GM12878 (cell line): ENCODE measurements at regions of chr11 and their contacts with region 1.

Region 1: GRCh38 chr11:111777094-111778046 is 11.2 kb upstream of the PPP2R1B start:
- DNase-seq: peak; percentile 52
- ATAC-seq: peak; percentile 92
- H3K4me3 ChIP-seq: no peak overlapping the region
- H3K27ac ChIP-seq: peak overlapping the region; percentile 68
- H3K4me1 ChIP-seq: peaks cover 8% of the 10 kb centered on the region; the same call in 1 of the 2 replicates
- H3K27me3 ChIP-seq: no peaks in the 10 kb centered on the region
- CTCF ChIP-seq: peak; percentile 65 to 86 (median 79)
- EP300 ChIP-seq: no peak
- POLR2A ChIP-seq: no peak
- RAD21 ChIP-seq: peak; percentile 88

Region 2: DNA sequence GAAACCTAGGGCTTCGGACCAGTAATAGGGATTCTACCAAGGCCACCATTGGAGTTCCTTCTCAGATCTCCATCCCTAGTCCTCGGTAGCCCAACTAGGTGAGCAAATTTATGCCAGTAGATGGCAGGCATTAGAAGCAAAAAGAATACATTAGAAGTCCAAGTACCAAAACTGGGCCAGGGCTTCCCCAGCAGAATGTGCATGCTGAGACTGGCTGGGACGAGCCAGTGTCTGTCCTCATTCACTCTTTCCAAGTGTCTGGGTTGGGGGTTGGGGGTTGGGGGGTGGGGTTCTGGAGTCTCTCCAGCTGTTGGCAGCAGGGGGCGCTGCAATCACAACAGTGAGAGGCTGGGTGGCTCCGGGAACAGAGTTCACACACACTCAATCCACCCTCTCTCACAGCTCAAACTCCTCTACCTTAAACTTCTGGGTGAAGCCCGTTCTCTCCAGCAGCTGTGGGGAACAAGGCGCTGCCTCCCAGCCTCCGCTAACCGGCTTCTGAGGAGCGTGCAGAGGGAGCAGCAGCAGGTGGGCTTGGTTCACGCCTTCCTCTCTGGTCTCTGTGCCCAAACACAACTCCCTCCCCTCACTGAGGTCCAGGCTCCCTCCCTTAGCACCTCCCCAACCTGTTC is 322.7 kb before region 1 on chr11:
- CTCF ChIA-PET with region 1: interaction called, 6 read pairs
- POLR2A ChIA-PET with region 1: no interaction called
- RAD21 ChIA-PET with region 1: no interaction called
- SMC1A ChIA-PET with region 1: interaction called, 6 read pairs
- in situ Hi-C with region 1: no loop called
- intact Hi-C with region 1: loop called (anchors 10 kb)
- DNase-seq: no peak
- ATAC-seq: peak; percentile 77
- H3K4me3 ChIP-seq: no peak overlapping the region
- H3K27ac ChIP-seq: no peak overlapping the region
- H3K4me1 ChIP-seq: peaks cover 9% of the 10 kb centered on the region
- H3K27me3 ChIP-seq: peaks cover 3% of the 10 kb centered on the region in 2 experiments; a peak in 3 of 4 replicates
- CTCF ChIP-seq: peak; percentile 21 to 52 (median 38); a peak in 5 of 6 replicates
- EP300 ChIP-seq: no peak
- POLR2A ChIP-seq: no peak
- RAD21 ChIP-seq: peak; percentile 43

Region 3: GRCh38 chr11:111596319-111596718 is 181.1 kb before region 1 on chr11:
- CTCF ChIA-PET with region 1: interaction called, 156 read pairs
- POLR2A ChIA-PET with region 1: no interaction called
- RAD21 ChIA-PET with region 1: interaction called, 73 read pairs
- SMC1A ChIA-PET with region 1: interaction called, 30 read pairs
- in situ Hi-C with region 1: loop called (anchors 5 kb)
- intact Hi-C with region 1: no loop called
- DNase-seq: no peak
- ATAC-seq: no peak
- H3K4me3 ChIP-seq: no peak overlapping the region
- H3K27ac ChIP-seq: no peak overlapping the region
- H3K4me1 ChIP-seq: peaks cover 2% of the 10 kb centered on the region
- H3K27me3 ChIP-seq: no peaks in the 10 kb centered on the region; a peak in 1 of 4 replicates
- CTCF ChIP-seq: no peak
- EP300 ChIP-seq: no peak
- POLR2A ChIP-seq: no peak
- RAD21 ChIP-seq: no peak

Region 4: DNA sequence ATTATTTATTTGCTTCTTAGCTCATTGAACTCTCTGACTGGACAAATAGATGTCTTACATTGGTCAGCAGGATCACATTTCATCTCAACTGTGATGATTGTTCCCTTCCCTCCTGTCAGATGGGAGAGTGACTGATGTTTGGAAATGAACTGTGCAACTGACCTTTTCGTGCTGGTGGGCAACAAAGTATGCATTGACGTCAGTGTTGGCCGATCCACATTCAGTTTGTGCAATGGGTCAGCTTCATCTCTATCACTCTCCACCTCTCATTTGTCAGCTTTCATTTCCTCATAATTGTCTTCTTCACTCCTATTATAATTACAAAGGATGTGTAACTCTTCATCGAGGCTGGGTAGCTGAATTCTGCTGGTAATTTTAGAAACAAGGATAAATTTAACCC is 82.5 kb before region 1 on chr11:
- CTCF ChIA-PET with region 1: interaction called, 19 read pairs
- POLR2A ChIA-PET with region 1: no interaction called
- RAD21 ChIA-PET with region 1: interaction called, 15 read pairs
- SMC1A ChIA-PET with region 1: interaction called, 28 read pairs
- in situ Hi-C with region 1: no loop called
- intact Hi-C with region 1: no loop called
- DNase-seq: no peak
- ATAC-seq: peak; percentile 72
- H3K4me3 ChIP-seq: no peak overlapping the region
- H3K27ac ChIP-seq: no peak overlapping the region
- H3K4me1 ChIP-seq: peaks cover 14% of the 10 kb centered on the region
- H3K27me3 ChIP-seq: no peaks in the 10 kb centered on the region
- CTCF ChIP-seq: no peak
- EP300 ChIP-seq: peak; percentile 51 to 71; a peak in 2 of 4 replicates
- POLR2A ChIP-seq: no peak
- RAD21 ChIP-seq: no peak

Region 5: GRCh38 chr11:111788051-111788450 is 10.7 kb after region 1 on chr11:
- CTCF ChIA-PET with region 1: interaction called, 31 read pairs
- POLR2A ChIA-PET with region 1: no interaction called
- RAD21 ChIA-PET with region 1: interaction called, 4 read pairs
- SMC1A ChIA-PET with region 1: interaction called, 20 read pairs
- in situ Hi-C with region 1: no loop called
- intact Hi-C with region 1: no loop called
- DNase-seq: no peak
- ATAC-seq: no peak
- H3K4me3 ChIP-seq: no peak overlapping the region
- H3K27ac ChIP-seq: no peak overlapping the region
- H3K4me1 ChIP-seq: no peaks in the 10 kb centered on the region
- H3K27me3 ChIP-seq: no peaks in the 10 kb centered on the region
- CTCF ChIP-seq: no peak
- EP300 ChIP-seq: no peak
- POLR2A ChIP-seq: no peak
- RAD21 ChIP-seq: no peak

Region 6: DNA sequence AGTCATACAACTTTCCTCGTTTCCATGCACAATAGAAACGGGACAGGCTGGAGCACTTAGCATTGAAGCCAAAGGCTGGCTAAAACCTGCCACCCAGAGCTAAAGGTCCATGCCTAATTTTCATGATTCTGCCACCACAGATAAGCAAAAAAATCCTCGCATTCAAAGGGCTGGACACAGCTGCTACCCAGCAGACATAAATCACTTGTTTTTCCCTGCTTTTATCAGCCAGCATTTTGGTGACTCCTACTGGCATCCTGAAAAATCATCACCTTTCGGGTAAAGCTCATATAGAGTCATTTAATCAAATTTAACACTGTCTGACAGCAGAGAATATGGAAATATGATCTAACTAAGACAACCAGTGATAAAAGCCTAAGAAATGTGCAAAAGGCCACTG is 56.2 kb after region 1 on chr11:
- CTCF ChIA-PET with region 1: interaction called, 14 read pairs
- POLR2A ChIA-PET with region 1: interaction called, 14 read pairs
- RAD21 ChIA-PET with region 1: interaction called, 38 read pairs
- SMC1A ChIA-PET with region 1: interaction called, 24 read pairs
- in situ Hi-C with region 1: no loop called
- intact Hi-C with region 1: no loop called
- DNase-seq: no peak
- ATAC-seq: no peak
- H3K4me3 ChIP-seq: no peak overlapping the region
- H3K27ac ChIP-seq: no peak overlapping the region
- H3K4me1 ChIP-seq: peaks cover 20% of the 10 kb centered on the region
- H3K27me3 ChIP-seq: no peaks in the 10 kb centered on the region
- CTCF ChIP-seq: no peak
- EP300 ChIP-seq: no peak
- POLR2A ChIP-seq: no peak
- RAD21 ChIP-seq: no peak

Region 7: GRCh38 chr11:111870886-111871692 is 93.7 kb after region 1 on chr11 and contains the start of gene ALG9:
- CTCF ChIA-PET with region 1: interaction called, 6 read pairs
- POLR2A ChIA-PET with region 1: no interaction called
- RAD21 ChIA-PET with region 1: interaction called, 13 read pairs
- SMC1A ChIA-PET with region 1: interaction called, 5 read pairs
- in situ Hi-C with region 1: no loop called
- intact Hi-C with region 1: no loop called
- DNase-seq: peak; percentile 56
- ATAC-seq: peak; percentile 96
- H3K4me3 ChIP-seq: peak within 1 kb of the TSS; percentile 79
- H3K27ac ChIP-seq: peak within 1 kb of the TSS; percentile 72
- H3K4me1 ChIP-seq: peaks cover 4% of the 10 kb centered on the region; the same call in 1 of the 2 replicates
- H3K27me3 ChIP-seq: no peaks in the 10 kb centered on the region
- CTCF ChIP-seq: peak; percentile 3 to 32 (median 13); a peak in 3 of 6 replicates
- EP300 ChIP-seq: no peak
- POLR2A ChIP-seq: peak; percentile 81
- RAD21 ChIP-seq: no peak
- polyA plus RNA-seq, gene ALG9: 10.8 to 22.1 TPM